Right ventricle myocardium inferior (tissue), 1 donor: ENCODE measurements at regions of chr12 and their contacts with region 1.

Region 1: GRCh38 chr12:56448860-56449621 is at the start of gene TIMELESS:
- DNase-seq: peak; percentile 94
- ATAC-seq: peak; percentile 98
- total RNA-seq, gene TIMELESS: 3.2 TPM

Region 2: DNA sequence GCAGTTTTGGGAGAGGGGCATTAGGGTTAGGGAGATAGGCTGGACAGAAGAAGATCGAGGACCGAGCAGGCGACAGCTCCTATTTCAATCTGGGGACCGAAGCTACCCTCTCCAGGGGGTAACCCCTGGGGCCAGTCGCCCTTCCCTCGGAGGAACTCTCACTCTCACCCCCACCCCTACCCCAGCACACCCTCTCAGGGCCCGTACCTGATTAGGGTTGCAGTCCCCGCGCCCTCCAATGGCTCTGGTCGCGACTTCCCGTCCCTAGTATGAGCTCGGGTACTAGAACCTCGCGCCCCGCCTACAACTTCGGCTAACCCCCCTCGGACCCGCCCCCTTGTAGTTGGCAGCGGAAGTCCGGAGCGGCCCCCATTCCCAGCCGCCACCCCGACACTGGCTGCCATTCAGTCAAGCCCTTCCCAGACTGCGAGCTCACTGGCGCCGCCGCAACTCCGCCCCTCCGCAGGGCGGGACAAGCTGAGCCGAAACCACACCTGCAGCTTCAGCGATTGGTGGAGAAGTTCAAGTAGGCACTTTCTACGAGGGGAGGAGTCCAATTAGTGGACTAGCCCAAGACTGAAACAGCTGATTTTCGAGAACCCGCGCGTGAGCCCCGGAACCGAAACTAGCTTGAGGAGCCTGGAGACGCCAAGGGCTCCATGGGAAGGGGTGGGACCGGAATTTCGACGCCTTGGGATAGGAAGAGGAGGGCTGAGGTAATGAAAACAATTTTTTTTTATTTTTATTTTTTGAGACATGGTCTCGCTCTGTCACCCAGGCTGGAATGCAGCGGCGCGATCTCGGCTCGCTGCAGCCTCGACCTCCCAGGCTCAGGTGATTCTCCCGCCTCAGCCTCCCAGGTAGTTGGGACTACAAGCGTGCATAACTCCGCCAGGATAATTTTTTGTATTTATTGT is 88.9 kb before region 1 on chr12 and contains the start of gene STAT2:
- intact Hi-C with region 1: loop called (anchors 5 kb)
- DNase-seq: peak; percentile 99
- ATAC-seq: peak; percentile 99
- total RNA-seq, gene STAT2: 31.6 TPM

Region 3: DNA sequence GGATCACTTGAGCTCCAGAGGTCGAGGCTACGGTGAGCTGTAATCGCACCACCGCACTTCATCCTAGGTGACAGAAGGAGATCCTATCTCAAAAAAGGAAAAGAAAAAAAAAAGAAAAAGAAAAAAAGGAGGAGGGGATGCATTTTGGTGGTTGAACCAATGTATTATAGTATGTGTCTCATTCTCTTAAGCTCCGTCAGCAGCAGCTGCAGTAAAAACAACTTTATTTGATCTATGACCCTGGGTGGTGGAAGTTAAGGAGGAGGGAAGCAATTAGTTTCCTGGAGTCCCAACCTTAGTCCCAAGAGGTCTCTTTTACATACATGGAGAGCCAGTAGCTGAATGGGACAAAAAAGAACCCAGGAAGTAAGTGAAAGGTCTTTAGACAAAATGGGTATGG is 59.6 kb before region 1 on chr12:
- intact Hi-C with region 1: no loop called
- DNase-seq: no peak
- ATAC-seq: no peak